ENCODE measurements at regions of chr2 and their contacts with region 1.

Region 1: GRCh38 chr2:235669269-235669831 is 175.5 kb downstream of the AGAP1 start:
- DNase-seq: peak; percentile 71 to 86 (median 80)
- ATAC-seq: peak in 3 of 4 donors; percentile 64 to 85 (median 82)
- H3K4me3 ChIP-seq: peak overlapping the region in 11 of 12 donors; percentile 20 to 75 (median 58)
- H3K27ac ChIP-seq: peak overlapping the region in 1 of 12 donors; percentile 48
- H3K4me1 ChIP-seq: peaks cover 0 to 43% (median 18%) of the 10 kb centered on the region in 12 donors
- H3K27me3 ChIP-seq: peaks cover 0 to 42% (median 0%) of the 10 kb centered on the region in 9 donors
- CTCF ChIP-seq: peak in 2 of 12 donors; percentile 7 to 27
- POLR2A ChIP-seq: no peak

Region 2: DNA sequence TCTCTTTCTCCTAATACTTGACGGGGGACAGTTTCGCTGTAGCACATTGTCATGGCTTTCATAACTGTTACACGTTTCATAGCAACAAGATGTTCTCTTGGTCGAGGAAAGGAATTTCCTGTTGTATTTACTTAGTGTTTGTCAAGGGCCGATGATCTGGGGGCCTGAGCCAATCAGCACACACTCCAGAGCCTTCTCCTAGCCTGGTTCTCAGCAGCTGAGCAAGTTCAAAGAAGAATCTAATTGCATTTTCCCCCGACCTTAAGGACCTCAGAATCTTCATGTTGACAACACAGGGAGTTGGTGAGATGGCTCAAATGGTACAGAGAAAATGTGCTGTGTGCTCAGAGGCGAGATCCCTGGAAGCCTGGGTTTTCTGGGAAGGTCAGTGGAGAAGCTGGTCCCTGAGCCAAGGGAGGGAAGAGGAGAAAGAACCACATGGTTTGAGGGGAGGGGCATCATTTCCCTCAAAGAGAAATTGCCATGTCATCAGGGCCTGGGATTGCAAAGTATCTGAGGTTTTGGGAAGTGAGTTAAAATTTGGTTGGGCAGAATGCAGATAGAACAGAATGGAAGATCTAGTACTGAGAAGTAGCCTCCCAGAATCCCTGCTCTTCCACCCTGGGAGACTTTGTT is 252.4 kb before region 1 on chr2:
- intact Hi-C with region 1: loop called in 1 of 10 experiments (anchors 10 kb)
- DNase-seq: no peak
- ATAC-seq: peak in 3 of 4 donors; percentile 18 to 34 (median 33)
- H3K4me3 ChIP-seq: no peak overlapping the region
- H3K27ac ChIP-seq: peak overlapping the region in 1 of 12 donors; percentile 45
- H3K4me1 ChIP-seq: peaks cover 0 to 31% (median 0%) of the 10 kb centered on the region in 12 donors
- H3K27me3 ChIP-seq: no peaks in the 10 kb centered on the region
- CTCF ChIP-seq: no peak
- POLR2A ChIP-seq: no peak

Region 3: DNA sequence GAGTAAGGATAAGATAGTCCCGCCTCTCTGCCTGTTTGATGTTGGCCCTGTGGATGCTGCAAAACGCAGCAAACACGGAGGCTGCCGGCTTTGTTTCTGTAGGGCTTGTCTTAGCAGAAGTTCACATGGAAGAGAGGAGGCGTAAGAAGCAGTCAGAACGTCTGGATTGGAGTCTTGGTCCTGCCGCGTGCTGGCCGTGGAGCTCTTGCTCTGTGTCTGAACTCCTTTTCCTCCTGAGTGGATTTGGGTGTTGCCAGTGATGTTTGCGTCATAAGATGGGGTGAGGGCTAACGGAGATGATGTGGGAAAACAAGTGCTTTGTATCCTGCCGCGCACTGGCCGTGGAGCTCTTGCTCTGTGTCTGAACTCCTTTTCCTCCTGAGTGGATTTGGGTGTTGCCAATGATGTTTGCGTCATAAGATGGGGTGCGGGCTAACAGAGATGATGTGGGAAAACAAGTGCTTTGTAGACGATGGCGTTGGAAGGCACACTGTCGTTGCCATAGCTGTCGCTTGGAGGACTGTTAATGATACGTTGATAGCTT is 65.4 kb after region 1 on chr2:
- intact Hi-C with region 1: loop called in 1 of 10 experiments (anchors 5 kb)
- DNase-seq: peak in 2 of 5 donors; percentile 39 to 41
- ATAC-seq: peak in 3 of 4 donors; percentile 49 to 76 (median 62)
- H3K4me3 ChIP-seq: peak overlapping the region in 3 of 12 donors; percentile 3 to 40 (median 10)
- H3K27ac ChIP-seq: peak overlapping the region in 7 of 12 donors; percentile 11 to 55 (median 42)
- H3K4me1 ChIP-seq: peaks cover 0 to 10% (median 0%) of the 10 kb centered on the region in 12 donors
- H3K27me3 ChIP-seq: no peaks in the 10 kb centered on the region
- CTCF ChIP-seq: no peak
- POLR2A ChIP-seq: no peak

Region 4: GRCh38 chr2:235921508-235922191 is 252.3 kb after region 1 on chr2:
- intact Hi-C with region 1: no loop called
- DNase-seq: no peak
- ATAC-seq: no peak
- H3K4me3 ChIP-seq: no peak overlapping the region
- H3K27ac ChIP-seq: no peak overlapping the region
- H3K4me1 ChIP-seq: no peaks in the 10 kb centered on the region
- H3K27me3 ChIP-seq: no peaks in the 10 kb centered on the region
- CTCF ChIP-seq: no peak
- POLR2A ChIP-seq: no peak